ENCODE measurements at regions of chr15 and their contacts with region 1.

Region 1: GRCh38 chr15:56428821-56429458 is 36.0 kb downstream of the MNS1 start:
- DNase-seq: peak; percentile 45 to 47
- ATAC-seq: peak; percentile 76; a peak in 5 of 6 replicates
- H3K4me3 ChIP-seq: no peak overlapping the region
- H3K27ac ChIP-seq: no peak overlapping the region
- H3K4me1 ChIP-seq: no peaks in the 10 kb centered on the region
- CTCF ChIP-seq: peak; percentile 80
- EP300 ChIP-seq: no peak
- POLR2A ChIP-seq: no peak
- RAD21 ChIP-seq: peak; percentile 82 to 83

Region 2: DNA sequence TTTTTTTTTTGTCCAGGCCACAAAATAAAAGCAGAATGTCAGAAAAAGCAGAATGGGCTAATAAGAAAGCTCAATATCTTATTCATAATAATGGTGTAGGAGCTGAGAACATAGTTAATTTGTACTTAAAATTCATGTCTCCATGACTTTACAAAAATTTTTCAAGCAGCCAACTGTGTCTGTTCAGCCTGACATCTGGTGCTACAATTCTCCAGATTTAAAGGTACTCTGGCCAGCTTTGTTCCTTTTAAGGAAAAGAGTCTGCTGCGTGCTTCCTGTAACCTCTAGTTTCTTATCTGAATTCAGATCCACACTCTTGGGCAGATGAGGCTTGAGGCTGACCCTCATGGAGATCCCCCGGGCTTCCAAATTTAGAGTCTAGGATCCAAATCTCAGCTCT is 176.6 kb before region 1 on chr15:
- CTCF ChIA-PET with region 1: interaction called, 17 read pairs
- POLR2A ChIA-PET with region 1: no interaction called
- DNase-seq: no peak
- ATAC-seq: no peak
- H3K4me3 ChIP-seq: no peak overlapping the region
- H3K27ac ChIP-seq: no peak overlapping the region
- H3K4me1 ChIP-seq: no peaks in the 10 kb centered on the region
- CTCF ChIP-seq: no peak
- EP300 ChIP-seq: no peak
- POLR2A ChIP-seq: no peak
- RAD21 ChIP-seq: no peak

Region 3: GRCh38 chr15:56383010-56383409 is 45.9 kb before region 1 on chr15:
- CTCF ChIA-PET with region 1: no interaction called
- POLR2A ChIA-PET with region 1: no interaction called
- DNase-seq: no peak
- ATAC-seq: no peak
- H3K4me3 ChIP-seq: no peak overlapping the region
- H3K27ac ChIP-seq: no peak overlapping the region
- H3K4me1 ChIP-seq: no peaks in the 10 kb centered on the region
- CTCF ChIP-seq: no peak
- EP300 ChIP-seq: no peak
- POLR2A ChIP-seq: no peak
- RAD21 ChIP-seq: no peak

Region 4: GRCh38 chr15:56732921-56733797 is 304.2 kb after region 1 on chr15 and contains the start of gene ZNF280D:
- CTCF ChIA-PET with region 1: no interaction called
- POLR2A ChIA-PET with region 1: no interaction called
- DNase-seq: peak; percentile 85 to 95
- ATAC-seq: peak; percentile 95 to 97
- H3K4me3 ChIP-seq: peak within 1 kb of the TSS; percentile 55
- H3K27ac ChIP-seq: peak within 1 kb of the TSS; percentile 93 to 98
- H3K4me1 ChIP-seq: peaks cover 23% of the 10 kb centered on the region
- CTCF ChIP-seq: no peak
- EP300 ChIP-seq: no peak
- POLR2A ChIP-seq: peak; percentile 61
- RAD21 ChIP-seq: 0 out of 5 replicates have a peak, but pooled peaks of 1 of the 2 experiments have one; percentile 20
- polyA plus RNA-seq, gene ZNF280D: 18.0 and 21.8 TPM in 2 replicates